H1 (cell line): ENCODE measurements at regions of chr1 and their contacts with region 1.

Region 1: GRCh38 chr1:31065310-31066217 is at the start of gene PUM1:
- DNase-seq: peak; percentile 94 to 99
- H3K4me3 ChIP-seq: peak within 1 kb of the TSS; percentile 89 to 98 (median 90)
- H3K27ac ChIP-seq: peak within 1 kb of the TSS; percentile 91
- H3K4me1 ChIP-seq: peaks cover 0 to 3% (median 0%) of the 10 kb centered on the region in 4 experiments; a peak in 1 of 7 replicates
- H3K27me3 ChIP-seq: no peaks in the 10 kb centered on the region
- CTCF ChIP-seq: peak in 1 of 3 experiments; percentile 2; a peak in 1 of 4 replicates
- EP300 ChIP-seq: peak in 1 of 2 experiments; percentile 72; a peak in 1 of 3 replicates
- POLR2A ChIP-seq: peak; percentile 88 to 91
- RAD21 ChIP-seq: no peak; a peak in 1 of 4 replicates
- total RNA-seq, gene PUM1: 169 and 177 TPM in 2 replicates

Region 2: DNA sequence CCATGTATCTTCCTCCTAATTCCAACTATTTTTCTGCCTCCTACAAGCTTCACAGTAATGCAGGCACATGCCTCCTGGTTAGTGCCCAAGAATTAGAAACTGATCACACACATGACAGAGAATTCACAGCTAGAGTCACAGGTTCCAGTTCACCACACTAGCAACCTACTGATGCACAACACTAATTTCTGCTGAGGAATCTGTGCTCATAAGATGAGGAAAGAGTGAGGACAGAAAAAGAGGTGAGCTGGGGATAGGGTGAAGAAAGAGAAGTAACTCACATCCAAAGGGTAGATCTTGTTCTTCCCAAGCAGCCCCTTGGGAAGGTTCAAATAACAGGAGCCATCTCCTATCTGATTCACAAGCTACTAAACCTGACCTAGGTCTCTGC is 61.3 kb before region 1 on chr1:
- CTCF ChIA-PET with region 1: no interaction called
- POLR2A ChIA-PET with region 1: interaction called, 10 read pairs
- DNase-seq: no peak
- H3K4me3 ChIP-seq: no peak overlapping the region
- H3K27ac ChIP-seq: no peak overlapping the region
- H3K4me1 ChIP-seq: no peaks in the 10 kb centered on the region
- H3K27me3 ChIP-seq: no peaks in the 10 kb centered on the region
- CTCF ChIP-seq: no peak
- EP300 ChIP-seq: no peak
- POLR2A ChIP-seq: no peak
- RAD21 ChIP-seq: no peak

Region 3: GRCh38 chr1:31027693-31028526 is 37.7 kb before region 1 on chr1:
- CTCF ChIA-PET with region 1: no interaction called
- POLR2A ChIA-PET with region 1: interaction called, 18 read pairs
- DNase-seq: no peak
- H3K4me3 ChIP-seq: no peak overlapping the region
- H3K27ac ChIP-seq: no peak overlapping the region
- H3K4me1 ChIP-seq: peaks cover 0 to 11% (median 3%) of the 10 kb centered on the region in 4 experiments; a peak in 2 of 7 replicates
- H3K27me3 ChIP-seq: no peaks in the 10 kb centered on the region
- CTCF ChIP-seq: no peak
- EP300 ChIP-seq: no peak
- POLR2A ChIP-seq: no peak
- RAD21 ChIP-seq: no peak

Region 4: GRCh38 chr1:31038360-31038759 is 27.2 kb before region 1 on chr1:
- CTCF ChIA-PET with region 1: no interaction called
- POLR2A ChIA-PET with region 1: interaction called, 22 read pairs
- DNase-seq: no peak
- H3K4me3 ChIP-seq: no peak overlapping the region
- H3K27ac ChIP-seq: no peak overlapping the region
- H3K4me1 ChIP-seq: peaks cover 0 to 7% (median under 1%) of the 10 kb centered on the region in 4 experiments; a peak in 1 of 7 replicates
- H3K27me3 ChIP-seq: no peaks in the 10 kb centered on the region
- CTCF ChIP-seq: no peak
- EP300 ChIP-seq: no peak
- POLR2A ChIP-seq: no peak
- RAD21 ChIP-seq: no peak

Region 5: DNA sequence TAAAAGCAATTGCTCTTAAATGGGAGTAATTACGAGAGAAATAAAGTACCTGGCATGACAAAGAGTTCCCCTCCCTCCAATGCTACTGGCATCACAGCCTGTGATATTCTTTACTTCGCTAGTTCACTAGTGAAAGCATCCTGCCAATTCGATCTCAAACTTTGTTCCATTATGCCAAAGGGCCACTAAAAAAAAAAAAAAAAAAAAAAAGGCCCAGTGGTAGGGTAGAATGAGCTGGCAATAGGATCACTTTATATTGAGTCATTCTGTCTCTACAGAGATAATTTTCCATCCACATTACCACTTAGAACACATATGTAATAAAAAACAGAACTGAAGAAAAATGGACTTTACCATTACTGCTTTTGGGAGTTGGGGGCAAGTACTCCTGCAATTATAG is 11.2 kb before region 1 on chr1:
- CTCF ChIA-PET with region 1: interaction called, 3 read pairs
- POLR2A ChIA-PET with region 1: interaction called, 28 read pairs
- DNase-seq: no peak
- H3K4me3 ChIP-seq: no peak overlapping the region
- H3K27ac ChIP-seq: no peak overlapping the region
- H3K4me1 ChIP-seq: no peaks in the 10 kb centered on the region; a peak in 1 of 7 replicates
- H3K27me3 ChIP-seq: no peaks in the 10 kb centered on the region
- CTCF ChIP-seq: no peak
- EP300 ChIP-seq: no peak
- POLR2A ChIP-seq: no peak
- RAD21 ChIP-seq: no peak

Region 6: DNA sequence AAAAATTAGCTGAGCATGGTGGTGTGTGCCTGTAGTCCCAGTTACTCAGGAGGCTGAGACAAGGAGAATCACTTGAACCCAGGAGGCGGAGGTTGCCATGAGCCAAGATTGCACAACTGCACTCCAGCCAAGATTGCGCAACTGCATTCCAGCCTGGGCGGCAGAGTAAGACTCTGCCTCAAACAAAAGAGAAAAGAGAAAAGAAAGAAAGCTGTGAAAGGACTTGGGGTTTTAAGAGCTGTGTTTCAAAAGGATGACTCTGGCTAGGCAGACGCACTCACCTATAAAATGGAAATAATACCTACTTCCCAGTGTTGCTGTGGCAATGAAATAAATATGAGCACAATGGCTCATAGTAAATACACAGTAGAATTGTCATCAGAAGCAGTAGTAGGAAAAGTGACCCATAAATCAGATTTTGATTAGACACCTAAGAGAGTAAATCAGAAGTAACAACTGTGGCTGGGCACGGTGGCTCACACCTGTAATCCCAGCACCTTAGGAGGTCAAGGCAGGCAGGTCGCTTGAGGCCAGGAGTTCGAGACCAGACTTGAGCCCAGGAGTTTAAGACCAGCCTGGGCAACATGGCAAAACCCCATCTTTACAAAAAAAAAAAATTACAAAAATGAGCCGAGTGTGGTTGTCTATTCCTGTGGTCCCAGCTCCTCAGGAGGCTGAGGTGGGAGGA is 45.9 kb after region 1 on chr1:
- CTCF ChIA-PET with region 1: no interaction called
- POLR2A ChIA-PET with region 1: interaction called, 11 read pairs
- DNase-seq: peak in 1 of 2 experiments; percentile 55
- H3K4me3 ChIP-seq: no peak overlapping the region
- H3K27ac ChIP-seq: no peak overlapping the region
- H3K4me1 ChIP-seq: peaks cover 0 to 3% (median 0%) of the 10 kb centered on the region in 4 experiments; a peak in 2 of 7 replicates
- H3K27me3 ChIP-seq: no peaks in the 10 kb centered on the region
- CTCF ChIP-seq: no peak
- EP300 ChIP-seq: no peak
- POLR2A ChIP-seq: no peak
- RAD21 ChIP-seq: no peak

Region 7: GRCh38 chr1:31155216-31155841 is 89.8 kb after region 1 on chr1:
- CTCF ChIA-PET with region 1: no interaction called
- POLR2A ChIA-PET with region 1: interaction called, 42 read pairs
- DNase-seq: peak; percentile 31 to 90
- H3K4me3 ChIP-seq: peak overlapping the region; percentile 49 to 66 (median 57)
- H3K27ac ChIP-seq: peak overlapping the region; percentile 60; the same call in 1 of the 2 replicates
- H3K4me1 ChIP-seq: peaks cover 0 to 3% (median 1%) of the 10 kb centered on the region in 4 experiments; a peak in 4 of 7 replicates
- H3K27me3 ChIP-seq: no peaks in the 10 kb centered on the region
- CTCF ChIP-seq: peak in 1 of 3 experiments; percentile 6; a peak in 1 of 4 replicates
- EP300 ChIP-seq: no peak
- POLR2A ChIP-seq: peak in 1 of 2 experiments; percentile 66; a peak in 2 of 3 replicates
- RAD21 ChIP-seq: 0 out of 4 replicates have a peak, but pooled peaks of 1 of the 2 experiments have one; percentile 8

Region 8: GRCh38 chr1:31196685-31197084 is 131.1 kb after region 1 on chr1:
- CTCF ChIA-PET with region 1: no interaction called
- POLR2A ChIA-PET with region 1: no interaction called
- DNase-seq: no peak
- H3K4me3 ChIP-seq: no peak overlapping the region
- H3K27ac ChIP-seq: no peak overlapping the region
- H3K4me1 ChIP-seq: peaks cover 0 to 7% (median under 1%) of the 10 kb centered on the region in 4 experiments; a peak in 4 of 7 replicates
- H3K27me3 ChIP-seq: no peaks in the 10 kb centered on the region
- CTCF ChIP-seq: no peak
- EP300 ChIP-seq: no peak
- POLR2A ChIP-seq: no peak
- RAD21 ChIP-seq: no peak